MCF 10A (cell line): ENCODE measurements at regions of chr5 and their contacts with region 1.

Region 1: DNA sequence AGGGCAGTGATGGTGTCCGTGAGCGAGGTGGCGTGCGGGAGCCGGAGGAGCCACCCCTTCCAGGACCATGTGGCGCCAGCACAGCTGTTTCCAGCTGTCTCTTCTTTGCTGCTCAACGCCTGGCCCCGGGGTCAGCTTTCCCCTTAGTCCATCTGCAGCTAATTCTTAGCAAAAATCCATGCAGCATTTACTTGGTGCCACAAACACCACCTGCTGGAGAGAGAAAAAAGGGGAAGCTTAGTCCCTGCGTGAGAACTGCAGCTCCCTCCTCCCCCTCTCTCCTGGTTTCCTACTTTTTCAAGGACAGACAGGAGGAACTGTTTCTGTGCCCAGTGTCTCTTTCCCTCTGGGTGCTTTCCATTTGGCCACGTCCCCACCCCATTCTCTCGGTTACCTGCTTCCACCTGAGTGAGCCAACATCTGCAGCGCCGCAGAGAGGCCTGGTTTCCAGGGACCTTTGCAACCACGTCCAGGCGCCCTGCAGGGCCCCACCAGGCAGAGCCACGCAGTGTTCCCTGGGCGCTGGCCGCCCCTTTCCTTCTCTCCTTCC is 3.4 kb downstream of the SLC6A19 start:
- DNase-seq: no peak
- H3K4me3 Mint-ChIP-seq: no peak overlapping the region
- H3K27ac Mint-ChIP-seq: no peak overlapping the region
- H3K4me1 Mint-ChIP-seq: no peaks in the 10 kb centered on the region
- H3K27me3 Mint-ChIP-seq: peaks cover 38% of the 10 kb centered on the region
- CTCF ChIP-seq: no peak

Region 2: DNA sequence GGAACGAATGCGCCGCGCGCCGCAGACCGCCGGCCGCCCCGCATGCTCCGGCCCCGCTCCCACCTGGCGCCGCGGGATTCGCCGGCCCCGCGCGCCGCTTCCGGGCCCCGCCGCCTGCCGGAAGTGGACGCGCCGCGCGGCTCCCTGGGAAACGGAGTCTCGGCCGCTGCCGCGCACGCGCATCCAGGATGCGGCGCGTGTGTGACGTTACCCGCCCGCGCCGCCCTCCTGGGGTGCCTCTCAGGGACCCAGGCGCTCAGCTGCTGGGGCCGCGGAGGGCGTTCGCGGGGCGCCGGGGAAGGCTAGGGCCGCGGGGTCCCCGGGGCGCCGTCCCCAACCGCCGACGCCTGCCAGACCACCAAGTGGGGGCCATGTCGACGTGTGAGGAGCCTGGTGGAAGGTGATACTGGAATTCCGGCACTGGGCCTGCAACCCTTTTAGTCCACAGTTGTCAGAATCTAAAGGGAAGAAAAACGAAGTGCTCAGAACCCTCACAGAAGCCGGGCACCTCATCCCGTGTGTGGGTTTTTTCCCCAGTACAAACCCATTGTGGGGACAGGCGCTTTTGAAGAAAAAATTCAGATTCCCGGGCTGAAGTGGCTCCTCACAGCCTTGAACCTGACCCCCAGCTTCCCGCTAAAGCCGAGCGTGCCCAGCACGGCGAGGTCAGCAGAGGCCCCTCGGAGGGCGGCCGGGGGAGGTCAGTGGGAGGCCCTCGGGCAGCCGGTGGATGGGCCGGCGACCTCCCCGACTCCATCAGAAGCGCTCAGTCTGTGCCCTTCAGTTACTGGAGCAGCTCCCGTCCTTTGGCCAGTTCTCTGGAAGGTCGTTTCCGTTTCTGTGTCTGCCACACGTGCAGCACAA is 140.4 kb after region 1 on chr5 and contains the start of gene CLPTM1L:
- CTCF ChIA-PET with region 1: no interaction called
- POLR2A ChIA-PET with region 1: no interaction called
- intact Hi-C with region 1: loop called (anchors 10 kb)
- DNase-seq: peak; percentile 81
- H3K4me3 Mint-ChIP-seq: peak within 1 kb of the TSS; percentile 83
- H3K27ac Mint-ChIP-seq: peak within 1 kb of the TSS; percentile 80
- H3K4me1 Mint-ChIP-seq: peaks cover 16% of the 10 kb centered on the region
- H3K27me3 Mint-ChIP-seq: no peaks in the 10 kb centered on the region
- CTCF ChIP-seq: no peak
- total RNA-seq, gene CLPTM1L: 116 and 128 TPM in 2 replicates

Region 3: DNA sequence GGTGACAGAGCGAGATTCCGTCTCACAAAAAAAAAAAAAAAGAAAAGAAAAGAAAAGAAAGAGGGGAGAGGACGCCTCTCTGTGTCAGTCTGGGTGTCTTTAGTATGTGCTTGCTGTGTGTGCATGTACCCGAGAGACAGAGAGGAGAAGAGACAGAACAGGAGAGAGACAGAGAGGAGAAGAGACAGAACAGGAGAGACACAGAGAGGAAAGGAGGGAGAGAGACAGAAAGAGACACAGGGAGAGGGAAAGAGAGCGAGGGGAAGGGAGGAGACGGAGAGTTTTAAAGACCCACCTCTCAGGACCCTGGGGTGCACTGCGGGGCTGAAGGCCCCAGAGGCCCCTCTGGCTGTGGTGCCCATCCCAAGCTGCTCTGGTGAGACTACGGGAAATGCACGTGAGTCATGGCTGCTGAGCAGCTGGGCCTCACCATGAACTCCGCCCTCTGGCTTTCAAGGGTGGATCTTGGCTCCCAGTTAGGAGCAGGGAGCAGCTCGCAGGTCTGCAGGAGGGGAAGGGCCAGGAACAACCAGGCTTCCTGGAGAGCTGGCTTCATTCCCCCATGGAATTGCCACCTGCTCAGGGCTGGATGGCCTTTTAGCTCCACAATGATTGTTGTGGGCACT is 232.6 kb after region 1 on chr5:
- CTCF ChIA-PET with region 1: no interaction called
- POLR2A ChIA-PET with region 1: no interaction called
- intact Hi-C with region 1: loop called (anchors 1 kb)
- DNase-seq: peak; percentile 57
- H3K4me3 Mint-ChIP-seq: no peak overlapping the region
- H3K27ac Mint-ChIP-seq: no peak overlapping the region
- H3K4me1 Mint-ChIP-seq: no peaks in the 10 kb centered on the region
- H3K27me3 Mint-ChIP-seq: peaks cover 13% of the 10 kb centered on the region
- CTCF ChIP-seq: no peak